ENCODE measurements at regions of chr20 and their contacts with region 1.

Region 1: DNA sequence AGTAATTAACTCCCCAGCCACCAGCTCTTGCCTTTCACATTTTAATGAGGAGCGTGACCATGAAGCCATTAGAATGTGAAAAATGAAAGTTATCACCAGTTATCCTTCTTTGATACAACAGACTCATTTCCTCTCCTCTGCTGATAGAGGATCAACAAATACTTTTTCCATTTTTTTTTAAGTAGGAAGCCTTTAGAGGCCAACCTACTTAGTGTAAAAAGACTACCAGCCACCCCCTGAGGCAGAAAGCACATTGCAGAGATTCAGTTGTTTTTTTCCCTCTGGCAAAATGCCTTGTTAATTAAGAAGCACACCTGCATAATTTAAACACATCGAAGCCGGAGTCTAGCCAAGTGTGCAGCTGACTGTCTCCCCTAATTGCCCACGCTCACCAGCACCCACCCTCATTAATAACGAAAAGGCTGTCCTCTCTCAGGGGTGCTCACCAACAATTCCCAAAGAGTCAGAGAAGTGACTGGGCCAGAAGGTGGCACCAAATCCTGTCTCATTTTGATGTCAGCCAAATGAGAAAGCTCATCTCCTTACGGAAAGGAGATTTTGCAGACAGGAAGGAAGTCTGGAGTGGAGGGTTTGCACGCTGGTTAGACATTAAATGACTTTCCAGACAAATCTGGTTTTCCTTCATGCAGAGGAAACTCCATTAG is 60.9 kb upstream of the MC3R start:
- DNase-seq: peak in 1 of 2 experiments; percentile 56
- H3K4me3 ChIP-seq: no peak overlapping the region
- H3K27ac ChIP-seq: no peak overlapping the region
- H3K4me1 ChIP-seq: no peaks in the 10 kb centered on the region
- H3K27me3 ChIP-seq: no peaks in the 10 kb centered on the region
- CTCF ChIP-seq: peak in 2 of 3 experiments; percentile 19 to 50; a peak in 1 of 4 replicates
- EP300 ChIP-seq: no peak
- POLR2A ChIP-seq: no peak
- RAD21 ChIP-seq: peak; percentile 29 to 57; a peak in 3 of 4 replicates

Region 2: DNA sequence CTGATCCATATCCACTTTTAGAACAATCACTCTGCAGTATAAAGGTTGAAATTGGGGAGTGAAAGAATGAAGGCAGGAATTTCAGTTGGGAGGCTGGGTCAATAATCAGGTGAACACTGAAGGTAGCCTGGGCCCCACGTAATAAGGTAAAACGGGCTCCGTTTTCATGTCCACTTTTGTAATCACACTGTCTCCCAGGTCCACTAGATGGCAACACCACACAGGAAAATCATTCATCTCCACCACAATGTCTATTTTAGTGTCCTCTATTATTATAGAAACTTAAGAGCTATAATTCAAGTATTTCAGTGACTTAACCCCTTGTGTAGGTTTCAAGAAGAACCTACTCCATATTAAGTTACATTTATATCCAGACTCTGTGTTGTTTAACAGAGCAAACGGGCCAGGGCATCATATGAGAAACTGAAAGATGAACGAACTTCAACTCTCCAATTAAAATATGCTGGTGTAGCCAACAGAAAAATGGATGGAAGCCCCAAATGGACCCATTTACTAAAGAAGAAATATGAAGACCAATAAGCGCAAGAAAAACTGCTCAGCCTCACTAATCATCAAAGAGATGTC is 14.9 kb after region 1 on chr20:
- CTCF ChIA-PET with region 1: interaction called, 10 read pairs
- POLR2A ChIA-PET with region 1: no interaction called
- DNase-seq: no peak
- H3K4me3 ChIP-seq: no peak overlapping the region
- H3K27ac ChIP-seq: no peak overlapping the region
- H3K4me1 ChIP-seq: no peaks in the 10 kb centered on the region; a peak in 1 of 7 replicates
- H3K27me3 ChIP-seq: no peaks in the 10 kb centered on the region
- CTCF ChIP-seq: peak in 2 of 3 experiments; percentile 28 to 36; a peak in 2 of 4 replicates
- EP300 ChIP-seq: no peak
- POLR2A ChIP-seq: no peak
- RAD21 ChIP-seq: peak; percentile 45 to 57

Region 3: GRCh38 chr20:56299356-56299755 is 111.7 kb after region 1 on chr20:
- CTCF ChIA-PET with region 1: no interaction called
- POLR2A ChIA-PET with region 1: no interaction called
- DNase-seq: no peak
- H3K4me3 ChIP-seq: no peak overlapping the region
- H3K27ac ChIP-seq: no peak overlapping the region
- H3K4me1 ChIP-seq: no peaks in the 10 kb centered on the region
- H3K27me3 ChIP-seq: no peaks in the 10 kb centered on the region
- CTCF ChIP-seq: no peak
- EP300 ChIP-seq: no peak
- POLR2A ChIP-seq: no peak
- RAD21 ChIP-seq: no peak

Measured in H1 (cell line).